Activated CD8-positive, alpha-beta T cell treated with anti-CD3 and anti-CD28 coated beads, Interleukin-2, amount 10 ng/mL, durations not matched to agents 7 days and 5 days (primary cell): ENCODE measurements at regions of chr17 and their contacts with region 1.

Region 1: DNA sequence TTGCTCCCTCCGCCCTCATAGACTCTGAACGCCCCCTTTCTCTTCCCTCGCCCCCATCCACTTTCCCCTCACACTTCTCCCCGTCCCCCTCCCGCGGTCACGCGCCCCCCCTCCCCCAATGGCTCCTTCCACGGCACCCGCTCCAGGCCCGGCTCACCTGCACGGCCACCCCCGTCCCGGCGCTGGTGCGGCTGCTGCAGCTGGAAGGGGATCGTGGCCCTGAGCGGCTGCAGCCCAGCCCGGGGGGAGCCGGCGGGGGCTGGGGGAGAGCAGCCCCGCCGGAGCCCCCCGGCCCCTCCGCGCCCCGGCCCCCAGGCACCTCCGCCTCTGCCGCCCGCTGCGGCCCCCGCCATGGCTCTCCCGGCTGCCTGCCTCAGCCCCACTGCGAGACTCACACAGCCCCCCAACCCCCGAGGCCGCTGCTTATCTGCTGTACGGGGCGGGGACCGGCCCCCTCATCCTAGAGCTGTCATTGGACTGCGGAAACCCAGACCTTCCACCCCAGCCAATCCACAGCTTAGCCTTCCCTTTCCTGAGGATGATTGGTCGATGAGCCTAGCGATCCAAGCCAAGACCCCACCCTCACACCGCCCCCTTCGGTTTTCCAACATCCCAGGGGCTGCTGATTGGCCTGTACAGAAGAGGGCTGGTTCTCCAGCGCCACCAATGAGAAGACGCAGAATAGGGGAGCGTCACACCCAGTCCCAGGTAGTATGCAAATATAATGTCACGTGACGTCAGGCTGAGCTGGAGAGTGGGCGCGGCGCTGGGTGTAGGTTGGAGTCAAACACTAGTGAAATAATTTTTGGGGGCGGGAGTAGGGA is at the start of gene FAM117A:
- DNase-seq: peak; percentile 99
- ATAC-seq: peak; percentile 96
- H3K4me3 Mint-ChIP-seq: peak within 1 kb of the TSS; percentile 88
- H3K27ac Mint-ChIP-seq: peak within 1 kb of the TSS; percentile 87
- H3K4me1 Mint-ChIP-seq: peaks cover 48% of the 10 kb centered on the region
- H3K27me3 Mint-ChIP-seq: peaks cover 18% of the 10 kb centered on the region
- total RNA-seq, gene FAM117A: 20.8 to 23.5 TPM

Region 2: GRCh38 chr17:49715717-49716279 is 48.1 kb before region 1 on chr17:
- CTCF ChIA-PET with region 1: interaction called, 17 read pairs
- POLR2A ChIA-PET with region 1: interaction called, 4 read pairs
- DNase-seq: peak; percentile 44
- ATAC-seq: peak; percentile 70
- H3K4me3 Mint-ChIP-seq: no peak overlapping the region
- H3K27ac Mint-ChIP-seq: peak overlapping the region; percentile 50
- H3K4me1 Mint-ChIP-seq: peaks cover 34% of the 10 kb centered on the region
- H3K27me3 Mint-ChIP-seq: no peaks in the 10 kb centered on the region

Region 3: DNA sequence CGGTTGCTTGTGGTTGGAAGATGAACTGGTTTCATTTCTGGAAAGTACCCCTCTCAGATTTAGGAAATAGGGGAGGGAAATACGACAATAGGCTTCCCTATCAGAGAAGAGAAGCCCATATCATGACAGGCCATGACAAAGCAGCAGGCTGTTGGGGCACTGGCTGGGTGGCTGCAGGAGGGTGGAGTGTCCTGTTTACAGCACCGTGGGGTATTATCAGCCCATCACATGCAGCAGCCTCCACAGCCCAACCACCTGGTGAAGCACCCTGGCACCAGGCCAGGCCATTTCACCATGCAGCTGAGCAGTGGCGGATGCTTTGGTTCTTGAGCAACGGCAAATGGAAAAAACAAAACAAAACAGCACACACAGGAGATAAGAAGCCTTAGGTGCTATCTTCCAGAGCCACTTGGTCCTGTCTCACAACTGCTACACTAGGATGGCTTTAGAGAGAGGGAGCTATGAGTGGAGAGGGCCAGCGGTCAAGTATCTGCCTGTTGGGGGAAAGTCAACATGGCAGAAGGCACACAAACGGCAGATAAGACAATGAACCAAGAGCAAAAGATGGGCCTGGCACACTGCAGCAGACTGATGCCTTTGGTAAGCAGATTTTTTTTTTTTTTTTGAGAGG is 24.2 kb before region 1 on chr17:
- CTCF ChIA-PET with region 1: interaction called, 9 read pairs
- POLR2A ChIA-PET with region 1: interaction called, 47 read pairs
- DNase-seq: peak; percentile 92
- ATAC-seq: peak; percentile 93
- H3K4me3 Mint-ChIP-seq: peak overlapping the region; percentile 84
- H3K27ac Mint-ChIP-seq: peak overlapping the region; percentile 98
- H3K4me1 Mint-ChIP-seq: peaks cover 80% of the 10 kb centered on the region
- H3K27me3 Mint-ChIP-seq: no peaks in the 10 kb centered on the region

Region 4: GRCh38 chr17:49748791-49749190 is 15.2 kb before region 1 on chr17:
- CTCF ChIA-PET with region 1: interaction called, 57 read pairs
- POLR2A ChIA-PET with region 1: interaction called, 47 read pairs
- DNase-seq: peak; percentile 77
- ATAC-seq: peak; percentile 79
- H3K4me3 Mint-ChIP-seq: peak overlapping the region; percentile 68
- H3K27ac Mint-ChIP-seq: peak overlapping the region; percentile 89
- H3K4me1 Mint-ChIP-seq: peaks cover 77% of the 10 kb centered on the region
- H3K27me3 Mint-ChIP-seq: no peaks in the 10 kb centered on the region

Region 5: DNA sequence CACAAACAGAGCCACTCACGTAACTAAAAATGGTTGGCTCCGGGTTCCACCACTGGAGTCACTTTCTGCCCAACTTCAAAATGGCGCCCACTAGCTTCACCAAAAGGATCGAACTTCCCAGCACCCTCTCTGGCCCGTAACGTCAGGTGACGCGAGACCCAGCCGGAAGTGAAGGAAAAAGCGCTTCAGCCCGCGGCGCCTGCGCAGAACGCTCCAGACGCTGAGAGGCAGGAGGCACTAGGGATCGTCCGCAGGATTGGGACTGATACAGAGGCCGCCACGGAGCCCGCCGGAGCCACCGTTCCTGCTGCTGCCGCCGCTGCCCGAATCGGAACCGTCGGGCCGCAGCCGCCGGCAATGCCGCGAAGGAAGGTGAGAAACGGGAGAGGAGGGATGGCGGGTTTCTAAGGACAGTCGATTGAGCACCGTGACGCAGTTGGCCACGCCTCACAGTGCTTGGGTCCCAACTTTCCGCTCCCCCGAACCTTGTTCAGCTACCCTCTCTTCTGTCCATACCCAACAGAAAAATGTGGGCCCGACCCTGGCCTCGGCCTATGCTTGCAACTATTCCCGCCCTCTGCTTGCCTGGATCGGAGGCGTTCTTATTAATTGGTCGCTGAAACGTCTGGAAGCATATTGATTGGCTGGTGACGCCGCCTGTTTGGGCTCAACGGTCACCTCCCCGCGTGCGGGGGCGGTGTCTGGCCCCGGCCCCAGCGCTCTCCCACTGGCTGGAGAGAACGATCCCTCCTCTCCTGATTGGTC is 24.7 kb after region 1 on chr17 and contains the start of gene KAT7:
- CTCF ChIA-PET with region 1: interaction called, 4 read pairs
- POLR2A ChIA-PET with region 1: interaction called, 25 read pairs
- DNase-seq: peak; percentile 99
- ATAC-seq: peak; percentile 96
- H3K4me3 Mint-ChIP-seq: peak within 1 kb of the TSS; percentile 94
- H3K27ac Mint-ChIP-seq: peak within 1 kb of the TSS; percentile 96
- H3K4me1 Mint-ChIP-seq: peaks cover 51% of the 10 kb centered on the region
- H3K27me3 Mint-ChIP-seq: no peaks in the 10 kb centered on the region
- total RNA-seq, gene KAT7: 75.8 to 76.0 TPM